ENCODE measurements at regions of chr20 and their contacts with region 1.

Region 1: DNA sequence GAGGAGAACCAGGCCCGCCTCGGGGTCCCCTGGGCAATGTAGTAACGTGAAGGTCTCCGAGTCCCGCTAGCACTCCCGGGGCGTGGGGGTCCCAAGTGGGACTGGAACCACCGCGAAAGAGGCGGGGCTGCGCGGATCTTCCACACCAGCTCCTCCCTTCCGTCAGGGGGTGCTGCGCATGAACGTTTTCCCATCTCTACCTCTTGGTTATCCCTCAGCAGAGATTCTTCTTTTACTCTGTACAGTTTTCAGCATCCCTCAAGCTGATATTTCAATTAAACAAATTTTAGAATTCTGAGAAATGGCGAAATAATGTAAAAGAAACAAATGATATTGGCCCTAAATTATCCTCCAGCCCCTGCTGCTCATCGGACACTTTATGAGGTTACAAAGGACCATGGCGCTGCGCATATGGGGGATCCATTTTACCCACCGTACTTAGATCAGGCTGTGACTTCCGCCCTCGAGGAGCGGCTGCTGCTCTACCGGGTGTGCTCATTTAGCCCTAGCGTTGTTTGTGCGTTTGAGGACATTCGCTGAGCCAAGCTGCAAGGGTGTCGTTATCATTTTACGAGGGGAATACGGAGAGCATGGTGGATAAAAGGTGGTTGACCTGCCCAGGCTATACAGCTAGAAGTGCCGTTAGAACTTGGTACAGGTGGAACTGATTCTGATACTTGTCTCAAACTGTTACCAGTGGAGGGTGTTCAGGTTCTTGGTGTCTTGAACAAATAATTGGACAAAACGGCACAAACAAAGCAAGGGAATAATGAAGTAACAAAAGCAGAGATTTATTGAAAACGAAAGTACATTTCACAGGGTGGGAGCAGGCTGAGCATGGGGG is 75.2 kb upstream of the CHD6 start:
- DNase-seq: peak; percentile 89
- ATAC-seq: peak; percentile 95
- H3K4me3 ChIP-seq: peak overlapping the region; percentile 72
- H3K27ac ChIP-seq: peak overlapping the region; percentile 48
- H3K4me1 ChIP-seq: no peaks in the 10 kb centered on the region
- H3K27me3 ChIP-seq: no peaks in the 10 kb centered on the region; the same call in 1 of the 2 replicates
- CTCF ChIP-seq: peak; percentile 25; the same call in 1 of the 2 replicates
- POLR2A ChIP-seq: no peak; the same call in 1 of the 2 replicates
- RAD21 ChIP-seq: no peak; the same call in 1 of the 2 replicates

Region 2: GRCh38 chr20:41136680-41137613 is 556.4 kb before region 1 on chr20 and contains the start of gene PLCG1:
- CTCF ChIA-PET with region 1: no interaction called
- POLR2A ChIA-PET with region 1: no interaction called
- dilution Hi-C with region 1: no loop called
- in situ Hi-C with region 1: no loop called
- intact Hi-C with region 1: loop called (anchors 5 kb)
- DNase-seq: peak; percentile 67
- ATAC-seq: peak; percentile 84
- H3K4me3 ChIP-seq: peak within 1 kb of the TSS; percentile 98
- H3K27ac ChIP-seq: peak within 1 kb of the TSS; percentile 94
- H3K4me1 ChIP-seq: peaks cover 22% of the 10 kb centered on the region
- H3K27me3 ChIP-seq: no peaks in the 10 kb centered on the region
- CTCF ChIP-seq: no peak
- POLR2A ChIP-seq: peak; percentile 62
- RAD21 ChIP-seq: no peak
- total RNA-seq, gene PLCG1: 54.7 and 59.1 TPM in 2 replicates

Region 3: DNA sequence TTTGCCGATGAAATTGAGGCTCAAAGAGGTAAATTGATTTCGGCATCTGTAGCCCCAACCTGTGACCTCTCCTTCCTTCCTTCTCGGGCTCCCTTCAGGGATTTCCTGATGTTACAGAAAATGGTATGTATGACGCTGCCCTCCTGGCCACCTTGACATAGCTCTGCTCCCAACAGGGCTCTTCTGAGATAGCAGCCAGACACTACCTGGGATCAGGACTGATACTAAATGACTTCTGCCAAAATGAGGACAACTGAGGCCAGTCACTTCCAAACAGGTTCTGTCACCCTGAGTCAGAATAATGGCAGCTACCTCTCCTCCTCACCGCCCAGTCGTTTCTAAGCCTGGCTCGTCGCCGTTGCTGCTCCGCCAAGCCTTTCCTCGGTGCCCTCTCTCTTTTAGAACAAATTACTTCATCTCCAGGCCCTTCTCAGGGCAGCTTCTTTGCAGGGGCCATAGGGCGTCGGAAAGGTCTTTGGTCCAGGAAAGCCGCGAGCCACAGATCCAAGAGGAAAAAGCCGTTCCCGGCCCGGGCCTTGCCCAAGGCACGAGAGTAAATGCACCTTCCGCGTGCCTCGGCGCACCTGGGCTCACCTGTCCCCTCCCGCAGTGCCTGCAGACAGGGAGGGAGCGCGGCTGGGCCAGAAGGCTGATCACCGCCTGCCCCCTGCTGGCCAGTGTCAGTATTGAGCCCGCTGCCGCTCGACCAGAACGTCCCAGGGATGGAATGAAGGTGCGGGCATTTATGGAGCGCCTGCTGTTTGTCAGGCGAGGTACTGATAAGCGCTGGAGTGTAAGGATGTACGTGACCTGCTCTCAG is 353.6 kb before region 1 on chr20:
- CTCF ChIA-PET with region 1: no interaction called
- POLR2A ChIA-PET with region 1: no interaction called
- dilution Hi-C with region 1: no loop called
- in situ Hi-C with region 1: no loop called
- intact Hi-C with region 1: loop called (anchors 10 kb)
- DNase-seq: peak; percentile 45
- ATAC-seq: peak; percentile 88
- H3K4me3 ChIP-seq: peak overlapping the region; percentile 11; the same call in 1 of the 2 replicates
- H3K27ac ChIP-seq: no peak overlapping the region
- H3K4me1 ChIP-seq: peaks cover 16% of the 10 kb centered on the region
- H3K27me3 ChIP-seq: no peaks in the 10 kb centered on the region
- CTCF ChIP-seq: peak; percentile 88
- POLR2A ChIP-seq: no peak
- RAD21 ChIP-seq: peak; percentile 98

Region 4: GRCh38 chr20:41428285-41428684 is 265.1 kb before region 1 on chr20:
- CTCF ChIA-PET with region 1: no interaction called
- POLR2A ChIA-PET with region 1: no interaction called
- dilution Hi-C with region 1: no loop called
- in situ Hi-C with region 1: no loop called
- intact Hi-C with region 1: loop called (anchors 5 kb)
- DNase-seq: peak; percentile 86
- ATAC-seq: peak; percentile 80
- H3K4me3 ChIP-seq: no peak overlapping the region
- H3K27ac ChIP-seq: no peak overlapping the region
- H3K4me1 ChIP-seq: peaks cover 21% of the 10 kb centered on the region
- H3K27me3 ChIP-seq: no peaks in the 10 kb centered on the region
- CTCF ChIP-seq: no peak
- POLR2A ChIP-seq: no peak
- RAD21 ChIP-seq: no peak

Region 5: GRCh38 chr20:41482647-41483552 is 210.5 kb before region 1 on chr20:
- CTCF ChIA-PET with region 1: interaction called, 3 read pairs
- POLR2A ChIA-PET with region 1: no interaction called
- dilution Hi-C with region 1: no loop called
- in situ Hi-C with region 1: no loop called
- intact Hi-C with region 1: loop called (anchors 10 kb)
- DNase-seq: peak; percentile 93
- ATAC-seq: peak; percentile 92
- H3K4me3 ChIP-seq: no peak overlapping the region
- H3K27ac ChIP-seq: peak overlapping the region; percentile 99
- H3K4me1 ChIP-seq: peaks cover 12% of the 10 kb centered on the region
- H3K27me3 ChIP-seq: no peaks in the 10 kb centered on the region
- CTCF ChIP-seq: no peak
- POLR2A ChIP-seq: no peak
- RAD21 ChIP-seq: no peak

Region 6: GRCh38 chr20:41739406-41739805 is 46.0 kb after region 1 on chr20:
- CTCF ChIA-PET with region 1: no interaction called
- POLR2A ChIA-PET with region 1: no interaction called
- dilution Hi-C with region 1: no loop called
- in situ Hi-C with region 1: no loop called
- intact Hi-C with region 1: no loop called
- DNase-seq: no peak
- ATAC-seq: no peak
- H3K4me3 ChIP-seq: no peak overlapping the region
- H3K27ac ChIP-seq: no peak overlapping the region
- H3K4me1 ChIP-seq: no peaks in the 10 kb centered on the region
- H3K27me3 ChIP-seq: no peaks in the 10 kb centered on the region
- CTCF ChIP-seq: no peak
- POLR2A ChIP-seq: no peak
- RAD21 ChIP-seq: no peak

Region 7: DNA sequence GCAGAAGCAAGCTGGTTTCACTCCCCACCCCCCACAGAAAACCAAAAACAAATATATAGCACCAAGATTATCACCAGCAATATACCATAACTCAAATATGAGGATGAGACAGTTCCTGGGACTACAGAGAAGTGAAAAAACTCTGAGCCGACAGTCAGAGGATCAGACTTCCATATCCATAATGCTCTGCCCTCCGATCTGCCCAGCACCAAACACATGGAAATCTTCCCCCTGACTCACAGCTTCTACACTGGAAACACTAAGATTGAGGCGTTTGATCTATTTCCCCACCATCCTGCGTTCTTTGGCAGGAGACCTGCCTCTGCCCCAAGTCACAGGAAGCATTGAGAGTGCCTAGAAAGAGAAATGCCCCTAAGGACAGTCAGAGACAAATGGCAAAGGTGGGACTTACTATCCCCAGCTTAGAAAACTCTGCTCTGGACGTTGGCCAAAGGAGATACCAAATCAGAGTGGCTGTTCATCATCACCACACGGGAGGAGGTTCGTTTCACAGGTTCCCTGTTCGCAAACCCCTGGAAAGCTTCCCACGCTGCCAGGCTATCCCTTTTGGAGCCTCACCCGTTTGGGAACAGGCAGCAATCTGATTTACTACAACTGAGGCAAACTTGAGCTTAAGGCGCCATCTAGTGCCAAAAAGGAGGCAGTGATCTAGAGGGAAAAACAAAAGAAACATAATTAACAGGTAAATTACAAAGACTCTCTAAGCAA is 1715.7 kb after region 1 on chr20:
- CTCF ChIA-PET with region 1: no interaction called
- POLR2A ChIA-PET with region 1: no interaction called
- dilution Hi-C with region 1: no loop called
- in situ Hi-C with region 1: no loop called
- intact Hi-C with region 1: loop called (anchors 1 kb)
- DNase-seq: peak; percentile 52
- ATAC-seq: peak; percentile 71; the same call in 1 of the 2 replicates
- H3K4me3 ChIP-seq: no peak overlapping the region
- H3K27ac ChIP-seq: no peak overlapping the region
- H3K4me1 ChIP-seq: no peaks in the 10 kb centered on the region
- H3K27me3 ChIP-seq: no peaks in the 10 kb centered on the region
- CTCF ChIP-seq: peak; percentile 86
- POLR2A ChIP-seq: no peak
- RAD21 ChIP-seq: peak; percentile 90